Activated CD4-positive, alpha-beta memory T cell treated with anti-CD3 and anti-CD28 coated beads, Interleukin-2, amount 10 ng/mL, durations not matched to agents 7 days and 5 days (primary cell): ENCODE measurements at regions of chr9 and their contacts with region 1.

Region 1: GRCh38 chr9:5886114-5886939 is 4.4 kb upstream of the MLANA start:
- DNase-seq: peak; percentile 85
- H3K4me3 Mint-ChIP-seq: no peak overlapping the region
- H3K27ac Mint-ChIP-seq: no peak overlapping the region
- H3K4me1 Mint-ChIP-seq: peaks cover 7% of the 10 kb centered on the region
- H3K27me3 Mint-ChIP-seq: peaks cover 1% of the 10 kb centered on the region

Region 2: GRCh38 chr9:5665059-5665458 is 221.3 kb before region 1 on chr9:
- CTCF ChIA-PET with region 1: no interaction called
- POLR2A ChIA-PET with region 1: no interaction called
- DNase-seq: no peak
- H3K4me3 Mint-ChIP-seq: no peak overlapping the region
- H3K27ac Mint-ChIP-seq: no peak overlapping the region
- H3K4me1 Mint-ChIP-seq: peaks cover 18% of the 10 kb centered on the region
- H3K27me3 Mint-ChIP-seq: no peaks in the 10 kb centered on the region

Region 3: DNA sequence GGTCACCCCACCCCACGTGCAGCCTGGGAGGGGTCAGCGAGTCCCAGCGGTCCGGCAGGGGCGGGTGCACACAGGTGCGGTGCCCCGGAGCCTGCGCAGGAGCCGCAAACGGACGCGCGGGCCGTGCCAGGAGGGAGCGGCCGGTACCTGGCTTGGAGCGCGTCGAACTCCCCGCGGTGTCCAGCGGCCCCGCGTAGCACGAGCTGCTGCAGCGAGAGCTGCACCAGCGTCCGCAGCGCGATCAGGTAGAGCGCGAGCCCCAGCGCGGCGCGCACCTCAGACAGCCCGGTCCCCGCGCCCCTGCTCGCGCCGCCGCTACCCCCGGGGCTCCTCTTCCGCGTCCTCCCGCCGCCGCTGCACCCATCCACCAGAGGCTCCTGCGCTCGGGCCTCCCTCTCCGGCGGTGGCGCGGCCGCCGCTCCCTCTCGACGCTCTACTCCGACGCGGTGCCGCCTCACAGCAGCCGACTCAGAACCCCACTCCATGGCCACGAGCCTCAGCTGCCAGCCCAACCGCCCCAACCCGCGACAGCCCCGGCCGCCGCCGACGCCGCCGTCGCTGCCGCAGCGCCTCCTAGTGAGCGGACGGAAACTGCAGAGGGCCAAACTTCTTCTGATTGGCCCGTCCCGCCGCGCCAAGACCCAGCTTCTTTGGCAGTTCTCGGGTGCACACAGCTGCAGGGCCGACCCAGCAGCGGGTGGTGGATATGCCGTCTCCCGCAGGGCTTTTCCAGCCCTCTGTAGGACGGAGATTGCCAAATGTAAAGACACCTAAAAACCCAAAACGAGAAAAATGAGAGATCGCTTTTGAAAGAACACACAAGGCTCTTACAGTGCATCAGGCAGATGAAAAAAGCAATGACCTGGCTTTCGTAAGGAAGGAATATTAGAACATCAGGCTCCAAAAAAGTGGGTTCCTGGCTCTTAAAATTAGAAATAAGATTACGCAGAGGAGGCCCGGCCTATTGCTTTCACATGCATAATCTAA is 53.5 kb before region 1 on chr9 and contains the start of gene ERMP1:
- CTCF ChIA-PET with region 1: interaction called, 41 read pairs
- POLR2A ChIA-PET with region 1: interaction called, 3 read pairs
- DNase-seq: peak; percentile 91
- H3K4me3 Mint-ChIP-seq: peak within 1 kb of the TSS; percentile 85
- H3K27ac Mint-ChIP-seq: peak within 1 kb of the TSS; percentile 84
- H3K4me1 Mint-ChIP-seq: peaks cover 54% of the 10 kb centered on the region
- H3K27me3 Mint-ChIP-seq: no peaks in the 10 kb centered on the region
- total RNA-seq, gene ERMP1: 35.1 to 39.1 TPM

Region 4: DNA sequence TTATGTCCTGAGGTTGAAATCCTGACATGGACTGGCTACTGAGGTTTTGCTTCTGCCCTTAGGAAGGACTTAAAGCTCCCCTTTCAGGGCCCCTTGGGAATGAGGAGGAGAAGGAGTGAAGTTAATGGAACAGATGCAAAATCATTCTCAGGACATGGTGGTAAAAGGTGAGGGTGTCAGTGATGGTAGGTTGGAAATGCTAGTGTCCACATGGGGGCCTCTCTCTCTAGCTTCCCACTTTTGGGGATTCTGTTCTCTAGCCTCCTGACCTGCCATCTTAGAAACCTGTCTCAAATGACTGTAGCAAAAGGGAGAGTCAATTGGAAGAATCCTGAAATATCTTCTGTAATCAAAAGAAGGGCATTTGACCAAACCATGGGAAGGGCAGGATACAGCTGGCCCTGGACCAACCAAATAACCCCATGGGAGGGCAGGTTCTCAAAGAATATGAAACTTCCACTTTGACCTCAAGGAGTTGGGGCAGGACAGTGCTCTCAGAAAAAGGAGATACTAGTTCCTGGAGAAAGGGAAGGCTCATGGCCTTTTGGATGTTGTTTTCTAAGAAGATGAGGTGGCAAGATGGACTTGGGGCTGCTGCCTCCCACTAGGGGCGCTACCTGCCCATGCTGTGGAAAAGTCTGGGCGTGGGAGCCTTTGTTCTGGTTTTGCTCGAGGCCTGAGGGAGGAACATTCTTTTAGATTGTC is 16.9 kb before region 1 on chr9:
- CTCF ChIA-PET with region 1: interaction called, 24 read pairs
- POLR2A ChIA-PET with region 1: no interaction called
- DNase-seq: peak; percentile 35
- H3K4me3 Mint-ChIP-seq: no peak overlapping the region
- H3K27ac Mint-ChIP-seq: no peak overlapping the region
- H3K4me1 Mint-ChIP-seq: peaks cover 11% of the 10 kb centered on the region
- H3K27me3 Mint-ChIP-seq: no peaks in the 10 kb centered on the region

Region 5: GRCh38 chr9:5920860-5921328 is 34.6 kb after region 1 on chr9:
- CTCF ChIA-PET with region 1: interaction called, 19 read pairs
- POLR2A ChIA-PET with region 1: no interaction called
- DNase-seq: no peak
- H3K4me3 Mint-ChIP-seq: no peak overlapping the region
- H3K27ac Mint-ChIP-seq: peak overlapping the region; percentile 33
- H3K4me1 Mint-ChIP-seq: peaks cover 27% of the 10 kb centered on the region
- H3K27me3 Mint-ChIP-seq: no peaks in the 10 kb centered on the region

Region 6: GRCh38 chr9:6015278-6016157 is 129.2 kb after region 1 on chr9 and contains the start of gene RANBP6:
- CTCF ChIA-PET with region 1: interaction called, 10 read pairs
- POLR2A ChIA-PET with region 1: no interaction called
- DNase-seq: peak; percentile 94
- H3K4me3 Mint-ChIP-seq: peak within 1 kb of the TSS; percentile 90
- H3K27ac Mint-ChIP-seq: peak within 1 kb of the TSS; percentile 95
- H3K4me1 Mint-ChIP-seq: peaks cover 54% of the 10 kb centered on the region
- H3K27me3 Mint-ChIP-seq: no peaks in the 10 kb centered on the region
- total RNA-seq, gene RANBP6: 22.0 to 23.3 TPM

Region 7: GRCh38 chr9:6054280-6055099 is 168.2 kb after region 1 on chr9:
- CTCF ChIA-PET with region 1: interaction called, 55 read pairs
- POLR2A ChIA-PET with region 1: no interaction called
- DNase-seq: peak; percentile 61
- H3K4me3 Mint-ChIP-seq: no peak overlapping the region
- H3K27ac Mint-ChIP-seq: no peak overlapping the region
- H3K4me1 Mint-ChIP-seq: peaks cover 17% of the 10 kb centered on the region
- H3K27me3 Mint-ChIP-seq: peaks cover 13% of the 10 kb centered on the region

Region 8: GRCh38 chr9:6080154-6080716 is 193.9 kb after region 1 on chr9:
- CTCF ChIA-PET with region 1: no interaction called
- POLR2A ChIA-PET with region 1: no interaction called
- DNase-seq: peak; percentile 43
- H3K4me3 Mint-ChIP-seq: peak overlapping the region; percentile 56
- H3K27ac Mint-ChIP-seq: no peak overlapping the region
- H3K4me1 Mint-ChIP-seq: peaks cover 3% of the 10 kb centered on the region
- H3K27me3 Mint-ChIP-seq: peaks cover 9% of the 10 kb centered on the region

Region 9: GRCh38 chr9:6305954-6306563 is 419.7 kb after region 1 on chr9:
- CTCF ChIA-PET with region 1: interaction called, 13 read pairs
- POLR2A ChIA-PET with region 1: no interaction called
- DNase-seq: no peak
- H3K4me3 Mint-ChIP-seq: no peak overlapping the region
- H3K27ac Mint-ChIP-seq: no peak overlapping the region
- H3K4me1 Mint-ChIP-seq: no peaks in the 10 kb centered on the region
- H3K27me3 Mint-ChIP-seq: peaks cover 24% of the 10 kb centered on the region